ENCODE measurements at regions of chr18 and their contacts with region 1.

Region 1: GRCh38 chr18:79246348-79247108 is 149.2 kb upstream of the NFATC1 start:
- DNase-seq: peak; percentile 78
- H3K4me3 ChIP-seq: peak overlapping the region in 1 of 3 experiments; percentile 12
- H3K27ac ChIP-seq: peak overlapping the region; percentile 27
- H3K4me1 ChIP-seq: peaks cover 7% of the 10 kb centered on the region
- H3K27me3 ChIP-seq: no peaks in the 10 kb centered on the region
- CTCF ChIP-seq: peak; percentile 86 to 99

Region 2: GRCh38 chr18:77899972-77900754 is 1346.4 kb before region 1 on chr18:
- CTCF ChIA-PET with region 1: no interaction called
- dilution Hi-C with region 1: no loop called
- in situ Hi-C with region 1: no loop called
- intact Hi-C with region 1: loop called (anchors 10 kb)
- DNase-seq: peak; percentile 14
- H3K4me3 ChIP-seq: no peak overlapping the region
- H3K27ac ChIP-seq: no peak overlapping the region
- H3K4me1 ChIP-seq: no peaks in the 10 kb centered on the region
- H3K27me3 ChIP-seq: no peaks in the 10 kb centered on the region
- CTCF ChIP-seq: peak; percentile 64 to 70

Region 3: DNA sequence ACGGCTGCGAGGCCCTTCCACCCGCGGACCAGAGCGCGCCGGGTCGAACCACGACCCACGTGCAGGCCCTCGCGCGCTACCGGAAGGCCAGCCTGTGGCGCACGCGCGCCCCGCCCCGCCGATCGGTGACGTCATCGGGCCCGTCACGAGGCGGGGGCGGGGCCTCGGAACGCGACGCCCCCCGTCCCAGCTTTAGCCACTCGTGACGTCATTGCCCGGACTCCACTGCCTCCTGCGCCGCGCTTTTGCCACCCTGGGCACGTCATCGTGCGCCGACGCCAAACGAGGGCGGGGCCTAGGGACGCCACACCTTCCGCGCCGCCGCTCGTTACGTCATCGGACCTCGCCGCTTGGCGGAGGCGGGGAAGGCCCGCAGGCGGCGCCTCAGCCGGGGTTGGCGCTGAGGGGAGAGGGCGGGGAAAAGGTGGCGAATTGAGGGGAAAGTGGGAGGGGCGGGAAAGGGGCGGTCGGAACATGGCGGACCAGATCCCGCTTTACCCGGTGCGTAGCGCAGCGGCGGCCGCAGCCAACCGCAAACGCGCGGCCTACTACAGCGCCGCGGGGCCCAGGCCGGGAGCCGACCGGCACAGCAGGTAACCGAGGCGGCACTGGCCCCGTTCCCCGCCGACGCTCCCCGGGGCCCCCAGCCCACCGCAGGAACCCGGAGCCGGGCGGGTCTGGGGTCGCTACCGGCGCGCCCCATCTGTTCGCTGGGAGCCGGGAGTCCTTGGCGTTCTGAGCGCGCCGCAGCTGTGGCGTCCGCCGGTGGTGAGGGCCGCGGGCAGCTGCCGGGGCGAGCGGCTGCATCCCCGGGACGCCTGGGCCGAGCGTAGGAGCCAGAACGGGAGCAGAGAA is 177.4 kb before region 1 on chr18 and contains the start of gene ATP9B:
- CTCF ChIA-PET with region 1: no interaction called
- dilution Hi-C with region 1: no loop called
- in situ Hi-C with region 1: no loop called
- intact Hi-C with region 1: loop called (anchors 1 kb)
- DNase-seq: peak; percentile 98
- H3K4me3 ChIP-seq: peak within 1 kb of the TSS; percentile 57 to 92 (median 92)
- H3K27ac ChIP-seq: peak within 1 kb of the TSS; percentile 65
- H3K4me1 ChIP-seq: peaks cover 5% of the 10 kb centered on the region
- H3K27me3 ChIP-seq: no peaks in the 10 kb centered on the region
- CTCF ChIP-seq: no peak
- total RNA-seq, gene ATP9B: 17.5 to 19.8 TPM

Region 4: DNA sequence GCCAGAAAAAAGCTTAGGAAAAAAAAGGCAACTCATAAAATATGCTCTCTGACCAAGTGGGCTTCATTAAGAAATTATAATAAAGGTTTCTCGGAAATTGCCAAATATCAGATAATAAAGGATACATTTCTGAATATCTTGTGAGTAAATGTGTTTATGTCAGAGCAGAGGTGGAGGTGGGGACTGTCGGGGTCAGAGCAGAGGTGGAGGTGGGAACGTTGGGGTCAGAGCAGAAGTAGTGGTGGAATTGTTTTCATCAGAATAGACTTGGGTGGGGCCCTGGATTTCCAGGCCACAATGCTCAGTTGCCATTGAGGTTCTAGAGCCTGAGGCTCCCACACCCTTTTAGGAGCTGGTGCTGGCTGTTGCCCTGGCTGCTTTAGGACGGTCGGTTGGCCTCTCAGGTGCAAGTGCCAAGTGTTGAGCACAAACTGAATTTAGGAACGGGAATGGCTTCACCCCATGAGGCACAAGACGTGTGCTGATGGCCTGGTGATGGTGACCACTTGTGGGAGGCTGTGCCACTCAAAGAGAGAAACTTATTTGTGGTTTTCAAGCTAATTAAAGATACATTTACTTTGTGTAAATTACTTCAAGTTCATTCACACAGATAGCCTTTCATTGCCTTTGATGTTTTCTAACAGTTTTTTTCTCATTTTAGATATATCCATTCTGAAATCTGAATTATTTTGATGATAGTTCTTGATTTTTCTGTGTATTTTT is 45.8 kb before region 1 on chr18:
- CTCF ChIA-PET with region 1: no interaction called
- dilution Hi-C with region 1: no loop called
- in situ Hi-C with region 1: no loop called
- intact Hi-C with region 1: loop called (anchors 1 kb)
- DNase-seq: peak; percentile 18
- H3K4me3 ChIP-seq: no peak overlapping the region
- H3K27ac ChIP-seq: no peak overlapping the region
- H3K4me1 ChIP-seq: peaks cover 34% of the 10 kb centered on the region
- H3K27me3 ChIP-seq: no peaks in the 10 kb centered on the region
- CTCF ChIP-seq: no peak

Region 5: DNA sequence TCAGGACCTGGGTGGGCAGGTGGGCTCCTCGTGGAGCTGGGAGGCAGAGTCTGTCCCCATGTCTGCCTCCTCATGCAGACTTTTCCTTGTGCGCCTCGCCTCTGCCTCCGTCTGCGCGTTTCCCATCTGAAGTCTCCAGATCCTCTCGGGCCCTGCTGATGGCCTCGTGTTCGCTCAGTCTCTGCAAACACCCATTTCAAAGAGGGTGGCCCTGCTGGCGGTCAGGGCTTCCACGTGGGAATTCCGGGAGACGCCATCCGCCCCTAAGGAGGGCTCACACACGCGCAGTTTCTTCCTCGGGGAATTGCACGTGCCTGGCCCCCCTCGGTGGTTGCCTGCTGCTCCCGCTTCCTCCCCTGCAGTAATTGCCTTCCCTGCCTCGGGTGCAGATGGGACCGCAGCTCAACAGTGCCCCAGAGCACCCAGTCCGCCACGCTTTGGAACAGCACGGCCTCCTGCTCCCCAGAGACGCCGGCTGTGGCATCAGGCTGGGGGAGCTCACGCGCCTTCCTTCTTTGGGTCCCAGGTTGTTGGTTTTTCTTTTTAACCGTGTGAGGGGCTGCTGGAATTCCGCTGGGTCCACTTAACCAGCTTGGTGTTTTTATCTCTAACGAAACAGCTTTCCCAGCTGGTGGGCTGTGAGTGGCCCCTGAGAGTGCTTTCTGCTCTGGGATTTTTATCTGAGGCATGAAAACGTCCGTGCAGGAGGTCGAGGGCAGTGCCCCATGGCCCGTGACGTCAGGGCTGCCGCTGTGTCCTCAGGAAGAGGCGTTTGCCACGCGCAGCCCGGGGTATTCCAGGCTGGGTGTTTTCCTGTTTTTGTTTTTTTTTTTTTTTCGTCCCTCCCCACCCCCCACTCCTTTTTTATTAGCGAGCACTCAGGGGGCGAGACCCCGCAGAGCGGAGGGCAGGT is 165.3 kb after region 1 on chr18:
- CTCF ChIA-PET with region 1: no interaction called
- dilution Hi-C with region 1: no loop called
- in situ Hi-C with region 1: no loop called
- intact Hi-C with region 1: no loop called
- DNase-seq: no peak
- H3K4me3 ChIP-seq: no peak overlapping the region
- H3K27ac ChIP-seq: no peak overlapping the region
- H3K4me1 ChIP-seq: no peaks in the 10 kb centered on the region
- H3K27me3 ChIP-seq: no peaks in the 10 kb centered on the region
- CTCF ChIP-seq: no peak

Measured in mammary epithelial cell (primary cell).